ENCODE measurements at regions of chr10 and their contacts with region 1.

Region 1: DNA sequence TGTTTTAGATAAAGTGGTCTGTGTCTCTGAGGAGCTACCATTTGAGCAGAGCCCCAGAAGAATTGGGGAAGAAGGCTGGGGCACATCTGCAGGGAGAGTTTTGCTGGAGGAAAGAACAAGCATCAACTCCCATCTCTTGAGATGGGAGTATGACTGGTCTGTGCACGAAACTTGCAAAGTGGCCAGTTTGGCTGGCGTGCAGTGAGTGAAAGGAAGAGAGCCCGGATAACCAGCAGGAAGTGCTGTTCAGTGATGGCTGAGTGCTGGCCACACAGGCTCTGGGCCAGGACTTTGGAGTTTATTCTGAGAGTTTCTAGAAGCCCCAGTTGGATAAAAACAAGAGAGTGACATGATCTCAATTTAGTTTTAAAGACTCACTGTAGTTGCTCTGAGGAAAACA is 34.4 kb upstream of the SVIL start:
- DNase-seq: peak; percentile 86

Region 2: DNA sequence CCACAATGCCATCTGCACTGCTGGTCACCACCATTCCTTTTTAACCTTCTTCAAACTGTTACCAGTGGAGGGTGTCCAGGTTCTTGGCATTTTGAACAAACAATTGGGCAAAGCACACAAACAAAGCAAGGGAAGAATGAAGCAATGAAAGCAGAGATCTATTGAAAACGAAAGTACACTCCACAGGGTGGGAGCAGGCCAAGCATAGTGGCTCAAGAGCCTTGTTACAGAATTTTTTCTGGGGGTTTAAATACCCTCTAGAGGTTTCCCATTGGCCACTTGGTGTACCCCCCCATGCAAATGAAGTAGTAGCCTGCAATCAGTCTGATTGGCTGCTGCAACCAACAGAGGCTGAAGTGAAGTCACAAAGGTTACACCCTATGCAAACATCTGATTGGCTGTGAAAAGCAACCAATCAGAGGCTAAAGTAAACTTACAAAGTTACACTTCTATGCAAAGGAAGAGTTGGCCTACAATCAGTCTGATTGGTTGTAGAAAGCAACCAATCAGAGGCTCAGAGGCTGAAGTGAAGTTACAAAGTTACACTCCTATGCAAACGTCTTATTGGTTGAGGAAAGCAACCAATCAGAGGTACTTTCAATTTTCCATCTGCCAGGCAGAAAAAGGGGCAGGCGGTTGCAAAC is 1239.5 kb before region 1 on chr10:
- intact Hi-C with region 1: loop called in 1 of 2 experiments (anchors 10 kb)
- DNase-seq: no peak

Region 3: DNA sequence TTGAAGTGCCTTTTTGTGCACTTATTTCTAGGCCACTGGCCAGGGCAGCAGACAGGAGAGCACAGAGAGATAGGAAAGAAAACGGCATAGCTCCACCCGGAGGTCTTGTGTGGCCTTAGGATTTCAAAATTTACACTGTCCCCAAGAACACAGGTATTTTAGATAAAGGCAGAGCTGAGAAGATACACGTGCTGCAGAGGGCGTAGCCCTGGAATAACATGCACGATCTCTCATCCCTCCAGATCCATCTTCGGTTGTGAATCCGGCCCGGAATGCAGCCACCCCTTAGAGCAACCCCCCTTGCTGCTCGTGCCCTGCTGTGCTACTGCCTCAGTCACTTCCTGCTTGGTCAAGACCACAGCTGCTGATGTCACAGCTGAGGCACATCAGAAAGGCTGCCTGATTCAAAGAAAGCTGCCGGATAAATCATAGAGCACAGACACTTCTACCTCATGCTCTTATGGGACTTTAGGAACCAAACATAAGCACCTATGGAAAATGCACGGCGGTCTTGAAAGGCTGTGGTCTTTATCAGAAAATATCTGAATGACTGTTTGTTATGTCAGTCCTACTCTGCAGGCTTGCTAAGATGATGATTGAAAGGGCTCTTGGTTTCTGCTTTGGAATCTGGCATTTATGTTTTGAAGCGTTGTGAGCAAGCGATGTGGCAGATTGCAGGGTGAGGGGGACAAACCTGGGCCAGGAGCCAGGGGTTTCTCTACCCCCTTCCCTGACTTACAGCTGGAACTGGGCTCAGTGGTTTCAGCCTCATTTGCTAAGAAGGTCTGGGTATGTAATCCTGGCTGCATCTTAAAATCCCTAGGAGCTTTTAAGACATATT is 186.3 kb before region 1 on chr10:
- intact Hi-C with region 1: no loop called
- DNase-seq: no peak

Region 4: GRCh38 chr10:30893208-30893607 is 1224.1 kb after region 1 on chr10:
- intact Hi-C with region 1: loop called in 1 of 2 experiments (anchors 10 kb)
- DNase-seq: no peak